Thyroid gland (tissue), 4 donors: ENCODE measurements at regions of chr5 and their contacts with region 1.

Region 1: DNA sequence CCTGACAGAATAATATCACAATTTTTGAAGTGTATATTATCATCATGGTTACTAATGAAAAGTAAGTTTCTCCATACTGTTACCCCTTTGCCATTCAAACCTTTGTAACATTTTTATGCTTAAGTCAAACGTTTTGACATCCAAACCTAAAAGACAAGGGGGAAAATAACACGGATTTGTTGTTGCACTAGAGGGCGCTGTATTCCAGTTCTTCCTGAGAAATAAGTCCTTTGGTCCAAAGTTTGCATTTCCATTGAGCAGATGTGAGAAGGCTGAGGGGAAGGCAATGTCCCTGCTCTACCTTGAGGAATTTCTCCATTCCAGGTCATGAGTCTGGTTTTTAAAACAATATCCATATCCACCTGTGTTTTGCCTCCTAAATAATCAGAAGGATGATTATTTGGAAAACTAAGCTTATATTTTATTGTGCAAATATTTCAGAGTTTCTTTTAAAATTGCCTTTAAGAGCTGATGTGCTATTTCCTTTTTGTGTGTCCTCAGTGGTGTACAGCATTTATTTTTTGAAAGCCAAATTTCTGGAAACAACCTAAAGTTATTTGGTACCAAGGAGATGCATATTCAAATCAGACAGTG is 9.7 kb downstream of the LECT2 start:
- DNase-seq: peak; percentile 51 to 57
- H3K4me3 ChIP-seq: no peak overlapping the region
- H3K27ac ChIP-seq: no peak overlapping the region
- H3K4me1 ChIP-seq: no peaks in the 10 kb centered on the region
- H3K27me3 ChIP-seq: no peaks in the 10 kb centered on the region
- CTCF ChIP-seq: peak; percentile 56 to 83 (median 72)
- POLR2A ChIP-seq: no peak

Region 2: DNA sequence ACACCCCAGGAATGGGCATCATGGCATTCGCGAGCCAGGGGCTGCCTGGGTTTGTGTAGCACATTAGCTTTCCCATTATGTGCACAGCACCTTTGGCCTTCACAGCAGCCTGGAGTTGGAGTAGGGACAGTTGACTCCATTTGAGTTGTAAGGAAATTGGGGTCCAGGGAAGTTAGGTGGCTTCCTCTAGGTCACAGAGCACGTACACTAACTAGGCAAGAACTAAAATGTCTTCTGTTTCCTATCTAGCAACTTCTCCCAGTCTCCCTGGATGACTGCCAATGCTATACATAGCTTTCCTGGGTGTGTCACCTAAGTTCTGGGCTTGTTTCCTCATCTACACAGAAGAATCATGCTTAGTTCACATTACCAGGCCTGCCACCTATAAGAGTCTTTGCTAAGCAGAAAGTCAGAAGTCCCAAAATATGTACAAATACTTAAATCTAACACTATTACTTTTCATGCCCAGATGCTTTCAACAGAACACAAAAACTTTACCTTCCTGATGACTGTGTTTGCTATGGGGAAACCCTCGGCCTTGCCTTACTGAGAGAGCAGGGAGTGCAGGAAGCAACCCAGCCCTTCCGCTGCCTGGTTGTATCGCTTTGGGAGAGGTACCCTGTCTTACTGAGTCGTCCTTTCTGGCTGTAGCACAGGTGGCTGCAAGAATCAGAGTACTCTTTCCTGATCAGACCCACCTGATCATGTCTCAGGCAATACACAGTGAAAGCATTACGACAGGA is 558.0 kb before region 1 on chr5:
- intact Hi-C with region 1: no loop called
- DNase-seq: no peak
- H3K4me3 ChIP-seq: no peak overlapping the region
- H3K27ac ChIP-seq: peak overlapping the region in 1 of 3 donors; percentile 24
- H3K4me1 ChIP-seq: peaks cover 0 to 19% of the 10 kb centered on the region in 2 donors
- H3K27me3 ChIP-seq: no peaks in the 10 kb centered on the region
- CTCF ChIP-seq: no peak
- POLR2A ChIP-seq: no peak

Region 3: DNA sequence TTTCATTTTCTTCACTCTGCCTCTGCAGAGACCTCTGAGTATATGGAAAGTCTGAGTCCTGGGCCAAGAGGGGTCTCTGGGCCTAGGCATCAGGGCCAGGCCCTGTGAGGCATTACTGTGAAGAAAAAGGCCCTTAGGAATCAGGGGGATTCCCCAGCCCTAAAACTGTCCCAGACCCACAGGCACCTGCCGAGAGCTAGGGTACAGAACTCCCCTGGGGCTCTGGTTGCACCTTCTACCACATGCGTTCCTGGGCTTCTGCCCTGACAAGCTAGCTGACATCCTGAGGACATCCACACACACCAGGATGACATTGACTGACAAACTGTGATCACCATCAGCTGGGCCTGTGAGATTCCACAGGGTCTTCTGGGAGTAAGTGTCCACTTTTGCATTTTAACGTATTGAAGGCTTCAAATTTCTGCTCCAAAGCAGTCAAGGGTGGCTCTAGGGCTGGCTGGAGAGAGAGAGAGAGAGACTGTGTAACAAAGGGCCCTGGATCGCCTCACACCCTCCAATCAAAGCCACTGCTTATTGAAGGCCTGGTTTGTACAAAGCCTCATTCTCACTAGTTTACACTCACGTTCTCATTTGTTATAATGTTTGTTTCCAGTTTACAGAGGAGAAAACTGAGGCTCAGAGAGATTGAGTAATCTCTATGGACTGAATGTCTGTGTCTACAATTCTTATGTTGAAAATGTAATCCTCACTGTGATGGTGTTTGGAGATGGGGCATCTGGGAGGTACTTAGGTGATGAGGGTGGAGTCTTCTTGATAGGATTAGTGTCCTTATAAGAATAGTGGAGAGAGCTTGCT is 128.9 kb after region 1 on chr5:
- intact Hi-C with region 1: loop called (anchors 10 kb)
- DNase-seq: no peak
- H3K4me3 ChIP-seq: no peak overlapping the region
- H3K27ac ChIP-seq: no peak overlapping the region
- H3K4me1 ChIP-seq: no peaks in the 10 kb centered on the region
- H3K27me3 ChIP-seq: no peaks in the 10 kb centered on the region
- CTCF ChIP-seq: no peak
- POLR2A ChIP-seq: no peak

Region 4: DNA sequence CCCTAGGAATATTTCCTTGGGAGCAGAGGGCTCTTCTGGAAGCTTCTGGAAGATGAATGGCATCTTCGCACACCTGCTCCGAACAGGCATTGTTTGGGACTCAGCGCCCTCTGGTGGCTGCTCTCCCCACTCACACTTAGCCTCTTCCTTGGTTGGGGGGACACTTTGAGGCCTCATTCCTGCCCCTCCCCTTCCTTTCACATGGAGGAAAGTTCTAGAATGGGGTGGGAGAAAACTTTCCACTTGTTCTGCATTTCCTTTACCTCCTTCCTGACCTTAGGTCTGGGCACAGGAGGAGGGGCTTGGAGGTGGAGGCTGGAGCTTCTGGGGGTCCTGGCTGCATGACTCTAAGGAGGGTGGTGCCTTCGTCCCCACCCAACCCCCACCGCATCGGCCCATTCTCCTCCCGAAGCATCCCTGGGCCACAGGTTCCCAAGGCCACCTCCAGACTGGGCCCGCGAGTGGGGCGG is 267.2 kb after region 1 on chr5:
- intact Hi-C with region 1: loop called (anchors 5 kb)
- DNase-seq: peak; percentile 57 to 59
- H3K4me3 ChIP-seq: no peak overlapping the region
- H3K27ac ChIP-seq: no peak overlapping the region
- H3K4me1 ChIP-seq: no peaks in the 10 kb centered on the region
- H3K27me3 ChIP-seq: no peaks in the 10 kb centered on the region
- CTCF ChIP-seq: peak; percentile 71 to 86 (median 80)
- POLR2A ChIP-seq: no peak